ENCODE measurements at regions of chr4 and their contacts with region 1.

Region 1: GRCh38 chr4:40309250-40309774 is 25.8 kb upstream of the CHRNA9 start:
- H3K4me3 Mint-ChIP-seq: peak overlapping the region; percentile 42
- H3K27ac Mint-ChIP-seq: no peak overlapping the region
- H3K4me1 Mint-ChIP-seq: peaks cover 47% of the 10 kb centered on the region
- H3K27me3 Mint-ChIP-seq: peaks cover 16% of the 10 kb centered on the region

Region 2: DNA sequence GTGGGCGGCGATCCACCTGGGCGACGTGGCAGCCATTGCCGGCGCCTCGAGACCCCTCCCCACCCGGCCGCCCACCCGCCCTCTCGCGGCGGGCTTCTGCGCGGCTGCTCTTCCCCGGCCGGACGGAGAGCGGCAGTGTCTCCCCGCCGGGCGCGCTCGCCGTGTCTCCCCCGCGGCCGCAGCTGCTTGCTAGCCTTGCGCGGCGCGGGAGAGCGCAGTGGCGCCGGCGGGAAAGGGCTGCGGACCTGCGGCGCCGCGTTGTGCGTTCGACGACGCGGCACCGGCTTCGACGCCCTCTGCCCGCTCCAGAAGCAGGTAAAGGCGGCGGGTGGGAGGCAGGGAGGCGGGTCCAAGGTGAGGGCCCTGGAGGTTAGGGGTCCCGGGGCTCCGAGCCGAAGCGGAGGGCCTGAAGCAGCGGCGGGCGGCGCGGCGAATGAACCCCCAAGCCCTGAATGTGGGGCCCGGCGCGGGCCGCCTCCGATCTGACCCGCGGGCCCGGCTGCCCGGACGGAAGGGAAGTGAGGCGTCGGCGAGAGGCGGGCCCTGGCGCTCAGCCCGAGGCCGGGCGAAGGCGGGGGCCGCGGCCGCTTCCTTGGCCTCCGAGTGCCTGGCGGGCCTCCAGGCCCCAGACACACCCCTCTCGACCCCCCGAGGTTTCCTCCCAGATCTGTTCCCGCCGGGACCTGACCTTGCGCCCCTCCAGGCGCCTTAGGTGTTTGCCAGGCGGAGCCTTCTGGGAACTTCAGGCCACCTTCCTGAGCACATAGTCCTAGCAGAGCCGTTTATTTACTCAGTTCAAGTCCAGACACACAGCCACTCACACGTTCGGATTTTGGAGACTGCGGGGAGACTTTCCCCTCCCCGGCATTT is 252.4 kb before region 1 on chr4 and contains the start of gene N4BP2:
- intact Hi-C with region 1: loop called (anchors 5 kb)
- H3K4me3 Mint-ChIP-seq: peak within 1 kb of the TSS; percentile 93
- H3K27ac Mint-ChIP-seq: peak within 1 kb of the TSS; percentile 97
- H3K4me1 Mint-ChIP-seq: peaks cover 22% of the 10 kb centered on the region
- H3K27me3 Mint-ChIP-seq: peaks cover 4% of the 10 kb centered on the region

Region 3: GRCh38 chr4:40149960-40150385 is 159.3 kb before region 1 on chr4:
- intact Hi-C with region 1: loop called (anchors 1 kb)
- H3K4me3 Mint-ChIP-seq: no peak overlapping the region
- H3K27ac Mint-ChIP-seq: no peak overlapping the region
- H3K4me1 Mint-ChIP-seq: no peaks in the 10 kb centered on the region
- H3K27me3 Mint-ChIP-seq: no peaks in the 10 kb centered on the region

Region 4: GRCh38 chr4:40228497-40229365 is 80.6 kb before region 1 on chr4:
- intact Hi-C with region 1: loop called (anchors 1 kb)
- H3K4me3 Mint-ChIP-seq: no peak overlapping the region
- H3K27ac Mint-ChIP-seq: no peak overlapping the region
- H3K4me1 Mint-ChIP-seq: peaks cover 11% of the 10 kb centered on the region
- H3K27me3 Mint-ChIP-seq: peaks cover 3% of the 10 kb centered on the region

Region 5: DNA sequence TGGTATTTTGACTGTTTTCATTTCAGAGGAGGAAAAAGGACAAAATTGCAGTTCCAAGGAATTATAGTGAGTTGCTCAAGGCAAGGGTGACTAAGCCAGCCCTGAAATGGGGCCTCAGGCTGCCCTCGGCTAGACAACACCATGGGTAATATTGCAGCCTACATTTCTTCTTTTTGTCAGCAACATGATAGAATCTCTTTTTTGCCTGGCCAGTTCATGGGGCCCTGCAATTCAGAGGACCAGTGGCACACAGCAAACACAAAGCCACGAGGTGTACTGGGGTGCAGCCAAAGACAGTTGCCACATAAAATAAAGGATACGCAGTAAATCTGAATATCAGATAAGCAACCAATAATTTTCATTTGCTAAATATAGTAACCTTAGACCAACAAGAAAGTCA is 278.5 kb after region 1 on chr4:
- intact Hi-C with region 1: no loop called
- H3K4me3 Mint-ChIP-seq: peak overlapping the region; percentile 44
- H3K27ac Mint-ChIP-seq: peak overlapping the region; percentile 95
- H3K4me1 Mint-ChIP-seq: peaks cover 81% of the 10 kb centered on the region
- H3K27me3 Mint-ChIP-seq: no peaks in the 10 kb centered on the region

Region 6: DNA sequence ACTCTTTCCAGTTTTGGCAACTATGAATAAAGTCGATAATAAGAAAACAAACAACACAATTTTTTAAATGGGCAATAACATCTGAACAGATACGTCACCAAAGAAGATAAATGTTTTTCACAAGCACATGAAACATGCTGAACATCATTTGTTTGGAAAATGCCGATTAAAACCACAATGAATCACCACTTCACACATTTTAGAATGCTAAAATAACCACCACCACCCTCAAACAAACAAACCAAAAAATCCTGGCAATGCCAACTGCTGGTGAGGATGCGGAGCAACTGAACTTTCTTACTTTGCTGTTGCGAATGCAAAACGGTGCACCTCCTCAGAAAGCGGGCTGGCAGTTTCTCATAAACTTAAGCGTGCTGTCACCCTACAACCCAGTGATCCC is 556.4 kb after region 1 on chr4:
- intact Hi-C with region 1: no loop called
- H3K4me3 Mint-ChIP-seq: no peak overlapping the region
- H3K27ac Mint-ChIP-seq: no peak overlapping the region
- H3K4me1 Mint-ChIP-seq: no peaks in the 10 kb centered on the region
- H3K27me3 Mint-ChIP-seq: no peaks in the 10 kb centered on the region